Endothelial cell of umbilical vein (primary cell): ENCODE measurements at regions of chr6 and their contacts with region 1.

Region 1: DNA sequence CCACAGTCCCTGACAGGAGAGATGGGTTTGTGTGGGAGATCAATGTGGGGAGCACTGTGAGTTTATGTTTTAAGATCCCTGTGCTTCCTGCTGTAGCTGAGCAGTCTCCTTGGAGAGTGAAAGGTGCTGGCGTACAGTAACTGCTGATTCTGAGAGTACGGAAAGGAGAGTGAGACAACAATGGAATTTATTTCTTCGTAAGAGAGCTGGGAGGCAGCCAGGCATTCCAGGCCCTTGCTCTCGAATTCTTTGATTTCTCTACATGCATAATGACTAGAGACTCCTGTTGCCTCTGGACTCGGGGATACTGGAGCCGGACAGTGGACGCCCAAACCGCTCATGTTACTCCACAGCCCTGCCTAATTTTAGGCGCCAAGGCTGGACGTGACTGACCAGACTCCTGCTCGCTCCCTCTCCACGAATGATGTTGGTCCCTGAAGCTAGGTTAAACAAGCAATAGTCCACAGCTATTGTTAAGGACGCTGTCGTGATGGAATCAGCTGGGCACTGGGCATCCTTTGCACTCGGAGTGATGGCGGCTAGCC is 131.0 kb upstream of the PHACTR1 start:
- DNase-seq: peak; percentile 96
- H3K4me3 ChIP-seq: peak overlapping the region in 1 of 3 experiments; percentile 25
- H3K27ac ChIP-seq: peak overlapping the region; percentile 100
- H3K4me1 ChIP-seq: peaks cover 51% of the 10 kb centered on the region
- H3K27me3 ChIP-seq: no peaks in the 10 kb centered on the region
- CTCF ChIP-seq: no peak
- POLR2A ChIP-seq: peak; percentile 49

Region 2: DNA sequence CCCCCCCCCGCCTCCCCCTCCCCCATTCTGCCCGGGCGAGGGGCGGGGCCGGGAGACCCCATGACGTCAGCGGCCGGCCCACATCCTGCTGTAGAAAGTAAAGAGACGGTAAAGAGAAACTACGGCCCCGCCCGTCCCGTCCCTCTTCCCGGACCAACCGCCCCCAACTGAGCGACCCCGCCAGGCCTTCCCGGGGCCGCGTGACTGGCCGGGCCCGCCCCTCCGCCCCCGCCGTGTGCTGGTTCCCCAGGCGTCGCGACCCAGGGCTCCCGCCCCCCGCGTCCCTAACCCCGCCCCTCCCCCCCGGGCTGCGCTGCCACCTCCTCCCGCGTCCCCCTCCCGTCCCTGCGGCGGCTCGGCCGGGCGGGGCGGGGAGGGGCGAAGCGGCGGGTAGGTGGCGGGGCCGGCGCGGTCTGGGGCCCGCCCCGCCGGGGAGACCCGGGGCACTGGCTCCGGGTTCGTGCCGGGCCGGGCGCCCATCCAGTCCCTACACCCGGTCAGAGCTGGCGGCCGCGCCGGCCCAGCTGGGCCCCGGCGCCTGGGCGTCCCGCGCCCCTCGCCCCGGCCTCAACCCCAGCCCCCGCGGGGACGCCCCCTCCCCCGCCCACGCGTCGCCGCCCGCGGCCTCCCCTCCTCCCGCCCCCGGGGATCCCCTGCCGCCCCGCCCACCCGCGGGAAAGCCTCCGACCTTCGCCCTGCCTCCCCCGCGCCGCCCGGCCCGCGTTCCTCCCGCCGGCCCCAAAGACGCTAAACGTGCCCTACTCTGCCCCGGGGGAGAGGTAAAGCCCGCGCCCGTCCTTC is 574.1 kb before region 1 on chr6:
- CTCF ChIA-PET with region 1: no interaction called
- POLR2A ChIA-PET with region 1: no interaction called
- dilution Hi-C with region 1: no loop called
- intact Hi-C with region 1: loop called (anchors 1 kb)
- DNase-seq: peak; percentile 96
- H3K4me3 ChIP-seq: peak overlapping the region in 1 of 3 experiments; percentile 71
- H3K27ac ChIP-seq: peak overlapping the region; percentile 98
- H3K4me1 ChIP-seq: peaks cover 38% of the 10 kb centered on the region
- H3K27me3 ChIP-seq: no peaks in the 10 kb centered on the region
- CTCF ChIP-seq: no peak
- POLR2A ChIP-seq: peak; percentile 7

Region 3: DNA sequence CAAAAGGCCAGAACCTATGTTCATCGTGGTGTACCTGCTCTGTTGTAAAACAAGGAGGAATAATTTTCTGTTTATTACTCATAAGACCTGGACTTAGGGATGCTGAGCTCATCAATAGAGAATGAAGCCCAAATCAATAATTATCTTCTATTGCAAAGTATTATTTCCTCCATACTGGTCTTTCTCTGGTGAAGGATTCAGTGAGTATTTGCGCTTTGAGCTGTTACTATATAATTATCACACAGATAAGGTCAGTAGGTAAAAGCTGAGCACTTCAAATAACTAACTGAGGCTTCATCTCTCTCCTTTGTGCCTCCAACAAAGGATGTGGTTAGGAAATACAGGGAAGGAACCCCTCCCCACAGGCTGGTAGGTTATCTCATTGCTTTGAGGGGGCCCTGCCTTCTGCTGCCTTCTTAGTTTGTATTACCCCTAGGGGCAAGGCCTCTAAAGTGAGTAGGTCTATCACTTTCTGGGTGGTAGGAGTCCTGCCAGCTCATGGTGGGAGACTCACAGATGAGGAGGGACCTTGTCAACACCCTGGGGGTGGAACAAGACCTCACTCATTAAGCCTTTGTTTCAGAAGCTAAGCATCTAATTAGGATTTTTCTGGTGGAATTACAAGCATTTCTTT is 260.9 kb before region 1 on chr6:
- CTCF ChIA-PET with region 1: no interaction called
- POLR2A ChIA-PET with region 1: no interaction called
- dilution Hi-C with region 1: no loop called
- intact Hi-C with region 1: loop called (anchors 1 kb)
- DNase-seq: no peak
- H3K4me3 ChIP-seq: no peak overlapping the region
- H3K27ac ChIP-seq: peak overlapping the region; percentile 60
- H3K4me1 ChIP-seq: peaks cover 17% of the 10 kb centered on the region
- H3K27me3 ChIP-seq: no peaks in the 10 kb centered on the region
- CTCF ChIP-seq: no peak
- POLR2A ChIP-seq: peak; percentile 40

Region 4: DNA sequence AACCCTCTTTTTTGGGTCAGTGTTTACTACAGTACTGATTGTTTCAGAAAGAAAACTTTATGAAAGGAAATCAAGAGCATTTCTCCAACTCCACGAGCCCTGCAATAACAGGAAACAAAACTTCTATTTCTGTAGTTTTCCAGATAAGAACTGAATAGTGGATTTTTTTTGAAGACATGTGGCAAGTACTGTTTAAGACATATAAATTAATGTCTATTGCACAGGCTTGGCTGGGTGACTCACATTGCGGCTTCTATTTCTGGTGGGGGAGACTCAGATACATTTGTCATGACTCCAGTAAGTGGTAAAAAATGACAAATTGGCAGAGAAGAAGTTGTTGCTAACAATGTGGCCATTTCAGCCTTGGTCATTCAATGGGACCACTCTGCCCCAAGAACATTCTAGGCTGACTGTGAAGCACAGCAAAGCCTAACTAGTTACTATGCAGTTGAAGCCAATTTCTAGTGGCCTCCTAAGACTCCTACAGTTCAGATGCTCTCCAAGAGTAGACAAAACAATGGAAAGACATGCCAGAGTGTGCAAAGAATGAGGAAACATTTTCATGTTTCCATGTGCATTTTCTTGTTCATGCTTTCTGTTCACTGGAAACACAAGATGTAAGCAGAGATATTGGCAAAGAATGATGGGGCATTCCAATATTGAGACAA is 94.5 kb before region 1 on chr6:
- CTCF ChIA-PET with region 1: interaction called, 3 read pairs
- POLR2A ChIA-PET with region 1: interaction called, 3 read pairs
- dilution Hi-C with region 1: loop called (anchors 25 kb)
- intact Hi-C with region 1: loop called (anchors 1 kb)
- DNase-seq: peak; percentile 96
- H3K4me3 ChIP-seq: no peak overlapping the region
- H3K27ac ChIP-seq: peak overlapping the region; percentile 93
- H3K4me1 ChIP-seq: peaks cover 39% of the 10 kb centered on the region
- H3K27me3 ChIP-seq: no peaks in the 10 kb centered on the region
- CTCF ChIP-seq: no peak
- POLR2A ChIP-seq: no peak

Region 5: DNA sequence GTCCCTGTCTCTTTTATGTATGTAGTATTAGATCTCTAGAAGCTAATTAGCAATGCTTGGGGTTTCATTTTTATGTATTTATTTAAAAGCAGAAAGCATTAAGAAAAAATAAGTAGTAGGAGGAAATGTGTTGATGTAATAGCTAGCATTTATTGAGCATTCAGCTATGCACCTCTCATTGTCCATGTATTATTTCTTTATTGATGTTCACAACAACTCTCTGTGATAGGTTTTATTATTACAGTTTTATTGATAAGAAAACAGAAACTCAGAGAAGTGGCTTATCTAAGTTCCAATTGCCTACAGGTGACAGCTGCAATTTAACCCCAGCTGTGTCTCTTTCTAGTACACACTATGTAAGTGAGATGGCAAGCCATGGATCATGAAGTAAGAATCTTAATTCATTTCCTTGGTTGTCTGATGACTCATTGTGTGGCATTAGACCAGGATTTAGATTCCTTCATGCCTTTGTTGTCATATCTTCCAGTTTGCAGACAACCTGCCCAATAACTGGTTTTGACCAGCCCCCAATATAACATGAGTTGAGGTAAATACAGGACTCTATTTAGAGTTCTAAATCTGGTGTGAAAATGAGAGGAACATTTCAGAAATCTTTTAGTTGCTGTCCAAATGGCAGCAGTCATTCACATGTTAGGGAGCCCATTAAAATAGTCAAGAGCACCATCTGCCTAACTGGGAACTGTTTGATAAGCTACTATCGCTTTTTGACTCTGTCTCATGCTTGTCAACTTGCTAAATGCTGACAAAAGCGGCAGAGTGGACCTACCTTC is 39.8 kb before region 1 on chr6:
- CTCF ChIA-PET with region 1: interaction called, 5 read pairs
- POLR2A ChIA-PET with region 1: interaction called, 4 read pairs
- dilution Hi-C with region 1: no loop called
- intact Hi-C with region 1: loop called (anchors 1 kb)
- DNase-seq: peak; percentile 87
- H3K4me3 ChIP-seq: no peak overlapping the region
- H3K27ac ChIP-seq: peak overlapping the region; percentile 89
- H3K4me1 ChIP-seq: peaks cover 33% of the 10 kb centered on the region
- H3K27me3 ChIP-seq: no peaks in the 10 kb centered on the region
- CTCF ChIP-seq: no peak
- POLR2A ChIP-seq: no peak

Region 6: GRCh38 chr6:12785301-12785700 is 199.7 kb after region 1 on chr6:
- CTCF ChIA-PET with region 1: no interaction called
- POLR2A ChIA-PET with region 1: no interaction called
- dilution Hi-C with region 1: no loop called
- intact Hi-C with region 1: no loop called
- DNase-seq: no peak
- H3K4me3 ChIP-seq: no peak overlapping the region
- H3K27ac ChIP-seq: no peak overlapping the region
- H3K4me1 ChIP-seq: no peaks in the 10 kb centered on the region
- H3K27me3 ChIP-seq: peaks cover 0 to 1% of the 10 kb centered on the region in 2 experiments
- CTCF ChIP-seq: no peak
- POLR2A ChIP-seq: no peak